Naive thymus-derived CD4-positive, alpha-beta T cell (primary cell): ENCODE measurements at regions of chr1 and their contacts with region 1.

Region 1: GRCh38 chr1:41919764-41920397 is 1.2 kb upstream of the HIVEP3 start:
- DNase-seq: peak; percentile 51 to 82 (median 79)
- ATAC-seq: peak; percentile 89
- H3K4me3 ChIP-seq: peak overlapping the region; percentile 74
- H3K4me3 Mint-ChIP-seq: peak overlapping the region; percentile 90 to 97 (median 95)
- H3K27ac ChIP-seq: peak overlapping the region; percentile 52
- H3K27ac Mint-ChIP-seq: peak overlapping the region; percentile 84 to 99 (median 96)
- H3K4me1 ChIP-seq: peaks cover 48 to 54% of the 10 kb centered on the region in 2 donors
- H3K4me1 Mint-ChIP-seq: peaks cover 37 to 62% (median 56%) of the 10 kb centered on the region in 7 donors
- H3K27me3 ChIP-seq: no peaks in the 10 kb centered on the region
- H3K27me3 Mint-ChIP-seq: peaks cover 0 to 17% (median 0%) of the 10 kb centered on the region in 5 donors

Region 2: GRCh38 chr1:41802532-41803501 is 117.1 kb before region 1 on chr1:
- CTCF ChIA-PET with region 1: interaction called, 3 read pairs
- POLR2A ChIA-PET with region 1: interaction called, 4 read pairs
- intact Hi-C with region 1: loop called in 1 of 2 experiments (anchors 5 kb)
- DNase-seq: peak in 7 of 9 donors; percentile 26 to 51 (median 48)
- ATAC-seq: peak; percentile 85
- H3K4me3 ChIP-seq: peak overlapping the region; percentile 32
- H3K4me3 Mint-ChIP-seq: peak overlapping the region; percentile 6 to 77 (median 62)
- H3K27ac ChIP-seq: peak overlapping the region; percentile 7
- H3K27ac Mint-ChIP-seq: peak overlapping the region; percentile 54 to 92 (median 87)
- H3K4me1 ChIP-seq: peaks cover 50 to 82% of the 10 kb centered on the region in 2 donors
- H3K4me1 Mint-ChIP-seq: peaks cover 59 to 84% (median 73%) of the 10 kb centered on the region in 7 donors
- H3K27me3 ChIP-seq: no peaks in the 10 kb centered on the region
- H3K27me3 Mint-ChIP-seq: no peaks in the 10 kb centered on the region

Region 3: DNA sequence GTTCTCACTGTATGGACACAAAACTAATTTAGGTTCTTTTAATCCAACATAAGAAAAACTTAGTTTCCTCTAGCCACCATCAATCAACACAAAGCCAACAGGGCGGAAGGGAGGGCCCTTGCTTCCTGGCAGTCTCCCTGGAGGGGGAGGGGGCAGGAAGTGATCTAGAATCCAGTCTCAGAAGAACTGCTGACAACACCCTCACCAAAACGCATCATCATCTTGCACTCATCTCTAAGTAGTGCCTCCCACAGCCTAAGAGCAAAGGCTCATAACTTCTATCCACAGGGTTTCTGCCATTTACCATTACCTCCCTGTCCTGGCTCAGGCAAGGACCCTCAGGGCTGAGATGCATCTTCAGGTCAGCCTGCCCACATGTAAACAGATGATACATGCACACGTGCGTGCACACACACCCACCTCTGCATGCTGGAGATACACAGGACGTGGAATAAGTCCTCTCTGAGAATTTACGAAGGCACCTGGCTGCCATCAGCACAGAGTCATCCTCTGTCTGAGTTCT is 21.6 kb before region 1 on chr1:
- CTCF ChIA-PET with region 1: interaction called, 38 read pairs
- POLR2A ChIA-PET with region 1: interaction called, 344 read pairs
- intact Hi-C with region 1: loop called (anchors 1 kb)
- DNase-seq: peak; percentile 31 to 96 (median 89)
- ATAC-seq: peak; percentile 98
- H3K4me3 ChIP-seq: peak overlapping the region; percentile 40
- H3K4me3 Mint-ChIP-seq: peak overlapping the region; percentile 53 to 84 (median 74)
- H3K27ac ChIP-seq: peak overlapping the region; percentile 65
- H3K27ac Mint-ChIP-seq: peak overlapping the region; percentile 87 to 99 (median 95)
- H3K4me1 ChIP-seq: peaks cover 36 to 74% of the 10 kb centered on the region in 2 donors
- H3K4me1 Mint-ChIP-seq: peaks cover 46 to 90% (median 73%) of the 10 kb centered on the region in 7 donors
- H3K27me3 ChIP-seq: no peaks in the 10 kb centered on the region
- H3K27me3 Mint-ChIP-seq: no peaks in the 10 kb centered on the region

Region 4: GRCh38 chr1:42013881-42014470 is 94.1 kb after region 1 on chr1:
- CTCF ChIA-PET with region 1: no interaction called
- POLR2A ChIA-PET with region 1: interaction called, 12 read pairs
- intact Hi-C with region 1: no loop called
- DNase-seq: peak in 1 of 9 donors; percentile 1
- ATAC-seq: no peak
- H3K4me3 ChIP-seq: no peak overlapping the region
- H3K4me3 Mint-ChIP-seq: peak overlapping the region; percentile 40 to 83 (median 74)
- H3K27ac ChIP-seq: no peak overlapping the region
- H3K27ac Mint-ChIP-seq: peak overlapping the region in 8 of 9 donors; percentile 18 to 89 (median 66)
- H3K4me1 ChIP-seq: peaks cover 0 to 10% of the 10 kb centered on the region in 2 donors
- H3K4me1 Mint-ChIP-seq: peaks cover 26 to 59% (median 46%) of the 10 kb centered on the region in 7 donors
- H3K27me3 ChIP-seq: no peaks in the 10 kb centered on the region
- H3K27me3 Mint-ChIP-seq: no peaks in the 10 kb centered on the region

Region 5: GRCh38 chr1:42057800-42058199 is 137.9 kb after region 1 on chr1:
- CTCF ChIA-PET with region 1: no interaction called
- POLR2A ChIA-PET with region 1: no interaction called
- intact Hi-C with region 1: no loop called
- DNase-seq: no peak
- ATAC-seq: no peak
- H3K4me3 ChIP-seq: no peak overlapping the region
- H3K4me3 Mint-ChIP-seq: no peak overlapping the region
- H3K27ac ChIP-seq: no peak overlapping the region
- H3K27ac Mint-ChIP-seq: no peak overlapping the region
- H3K4me1 ChIP-seq: peaks cover 0 to 3% of the 10 kb centered on the region in 2 donors
- H3K4me1 Mint-ChIP-seq: peaks cover 0 to 10% (median 5%) of the 10 kb centered on the region in 7 donors
- H3K27me3 ChIP-seq: peaks cover 0 to 6% of the 10 kb centered on the region in 2 donors
- H3K27me3 Mint-ChIP-seq: peaks cover 25 to 70% (median 47%) of the 10 kb centered on the region in 5 donors